ENCODE measurements at regions of chr4 and their contacts with region 1.

Region 1: DNA sequence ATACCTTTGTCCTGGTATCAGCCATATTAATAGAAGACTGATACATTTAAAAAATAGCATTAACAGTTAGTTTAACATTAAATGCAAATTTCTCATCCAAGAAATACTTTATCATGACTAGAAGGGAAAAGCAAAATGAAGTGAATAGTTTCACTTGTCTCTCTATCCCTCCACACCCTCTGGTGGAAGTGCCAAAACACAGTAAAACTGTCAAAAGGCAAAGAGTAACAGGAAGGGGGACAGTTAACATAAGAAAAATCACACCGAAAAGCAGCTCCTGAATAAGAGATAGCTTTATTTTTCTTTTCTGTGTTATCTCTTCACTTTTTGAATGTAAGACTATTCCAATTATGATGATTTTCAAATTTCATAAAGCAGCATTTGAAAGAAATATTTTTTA is 187.2 kb downstream of the FBXW7 start:
- DNase-seq: no peak
- H3K4me3 ChIP-seq: no peak overlapping the region
- H3K4me3 Mint-ChIP-seq: no peak overlapping the region
- H3K27ac Mint-ChIP-seq: no peak overlapping the region
- H3K4me1 ChIP-seq: no peaks in the 10 kb centered on the region
- H3K4me1 Mint-ChIP-seq: peaks cover 15% of the 10 kb centered on the region
- H3K27me3 ChIP-seq: no peaks in the 10 kb centered on the region
- H3K27me3 Mint-ChIP-seq: no peaks in the 10 kb centered on the region
- CTCF ChIP-seq: peak in 1 of 2 experiments; percentile 18

Region 2: DNA sequence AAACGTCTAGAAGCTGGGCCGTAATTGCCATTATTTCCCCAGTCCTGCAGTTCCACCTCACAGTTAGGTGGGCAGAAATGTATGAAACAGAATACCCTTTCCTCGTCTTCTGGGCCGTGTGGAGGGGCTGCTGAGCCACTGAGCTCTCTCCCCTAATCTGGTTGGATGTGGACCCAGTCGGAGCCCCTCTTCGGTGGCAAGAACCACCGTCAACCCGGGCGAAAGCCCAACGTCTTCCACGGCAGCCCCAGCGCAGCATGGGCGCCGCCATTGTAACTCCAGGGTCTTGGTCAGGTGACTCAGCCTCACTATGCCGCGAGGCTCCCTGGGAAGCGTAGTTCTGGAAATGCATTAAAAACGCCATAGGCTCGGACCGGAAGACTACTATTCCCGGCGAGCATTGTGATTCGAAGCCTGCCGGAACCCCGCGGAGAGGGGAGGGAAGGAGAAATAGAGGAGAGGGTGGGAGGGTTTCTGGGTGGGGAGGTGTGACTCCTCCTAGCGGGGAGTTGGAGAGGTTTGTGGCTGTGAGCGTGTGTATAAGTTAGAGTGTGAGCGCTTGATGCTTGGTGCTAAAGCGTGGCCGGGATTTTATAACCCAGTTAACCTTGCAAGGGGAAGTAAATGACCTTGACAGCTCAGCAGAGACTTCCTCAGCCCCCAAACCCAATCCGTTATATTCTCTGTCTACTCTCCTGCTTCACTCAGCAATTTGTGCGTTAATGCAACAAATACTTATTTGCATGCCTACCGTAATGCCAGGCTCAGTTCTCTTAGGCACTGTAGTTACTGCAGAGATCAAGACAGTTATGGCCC is 587.8 kb before region 1 on chr4 and contains the start of gene GATB:
- CTCF ChIA-PET with region 1: no interaction called
- POLR2A ChIA-PET with region 1: no interaction called
- intact Hi-C with region 1: loop called (anchors 10 kb)
- DNase-seq: peak; percentile 93 to 96
- H3K4me3 ChIP-seq: peak within 1 kb of the TSS; percentile 94
- H3K4me3 Mint-ChIP-seq: peak within 1 kb of the TSS; percentile 98
- H3K27ac Mint-ChIP-seq: peak within 1 kb of the TSS; percentile 100
- H3K4me1 ChIP-seq: peaks cover 5% of the 10 kb centered on the region; the same call in 1 of the 2 replicates
- H3K4me1 Mint-ChIP-seq: peaks cover 9% of the 10 kb centered on the region
- H3K27me3 ChIP-seq: no peaks in the 10 kb centered on the region
- H3K27me3 Mint-ChIP-seq: peaks cover 8% of the 10 kb centered on the region
- CTCF ChIP-seq: peak; percentile 64 to 70
- total RNA-seq, gene GATB: 20.6 and 29.6 TPM in 2 replicates

Region 3: GRCh38 chr4:152106113-152106763 is 242.4 kb before region 1 on chr4:
- CTCF ChIA-PET with region 1: no interaction called
- POLR2A ChIA-PET with region 1: no interaction called
- intact Hi-C with region 1: loop called (anchors 10 kb)
- DNase-seq: peak; percentile 13 to 51
- H3K4me3 ChIP-seq: no peak overlapping the region
- H3K4me3 Mint-ChIP-seq: no peak overlapping the region
- H3K27ac Mint-ChIP-seq: no peak overlapping the region
- H3K4me1 ChIP-seq: peaks cover 48% of the 10 kb centered on the region
- H3K4me1 Mint-ChIP-seq: peaks cover 30% of the 10 kb centered on the region
- H3K27me3 ChIP-seq: no peaks in the 10 kb centered on the region
- H3K27me3 Mint-ChIP-seq: no peaks in the 10 kb centered on the region
- CTCF ChIP-seq: no peak

Region 4: DNA sequence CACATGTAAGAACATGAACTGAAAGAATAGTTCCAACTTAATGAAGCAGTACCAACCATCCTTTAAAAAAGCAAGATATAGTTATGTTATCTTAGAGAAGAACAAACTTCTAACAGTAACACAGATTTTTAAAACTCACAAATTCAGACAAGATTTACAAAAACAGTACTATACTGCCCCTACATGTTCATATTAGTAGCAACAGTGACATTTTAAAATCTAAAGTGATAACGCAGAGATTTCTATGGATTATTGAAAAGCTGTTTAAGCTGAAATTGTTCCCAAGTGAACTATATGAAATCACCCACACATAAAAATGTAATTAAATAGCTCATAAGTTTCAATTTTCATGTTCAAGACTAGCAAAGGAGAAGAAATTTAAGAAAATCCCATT is 21.2 kb after region 1 on chr4:
- CTCF ChIA-PET with region 1: no interaction called
- POLR2A ChIA-PET with region 1: no interaction called
- intact Hi-C with region 1: no loop called
- DNase-seq: no peak
- H3K4me3 ChIP-seq: no peak overlapping the region
- H3K4me3 Mint-ChIP-seq: no peak overlapping the region
- H3K27ac Mint-ChIP-seq: no peak overlapping the region
- H3K4me1 ChIP-seq: no peaks in the 10 kb centered on the region
- H3K4me1 Mint-ChIP-seq: no peaks in the 10 kb centered on the region
- H3K27me3 ChIP-seq: no peaks in the 10 kb centered on the region
- H3K27me3 Mint-ChIP-seq: no peaks in the 10 kb centered on the region
- CTCF ChIP-seq: no peak